Dendritic cell treated with granulocyte-macrophage colony-stimulating factor and Interleukin-4, amounts not matched to agents 40 ng/mL and 50 ng/mL, for 4 days (primary cell): ENCODE measurements at regions of chr12 and their contacts with region 1.

Region 1: DNA sequence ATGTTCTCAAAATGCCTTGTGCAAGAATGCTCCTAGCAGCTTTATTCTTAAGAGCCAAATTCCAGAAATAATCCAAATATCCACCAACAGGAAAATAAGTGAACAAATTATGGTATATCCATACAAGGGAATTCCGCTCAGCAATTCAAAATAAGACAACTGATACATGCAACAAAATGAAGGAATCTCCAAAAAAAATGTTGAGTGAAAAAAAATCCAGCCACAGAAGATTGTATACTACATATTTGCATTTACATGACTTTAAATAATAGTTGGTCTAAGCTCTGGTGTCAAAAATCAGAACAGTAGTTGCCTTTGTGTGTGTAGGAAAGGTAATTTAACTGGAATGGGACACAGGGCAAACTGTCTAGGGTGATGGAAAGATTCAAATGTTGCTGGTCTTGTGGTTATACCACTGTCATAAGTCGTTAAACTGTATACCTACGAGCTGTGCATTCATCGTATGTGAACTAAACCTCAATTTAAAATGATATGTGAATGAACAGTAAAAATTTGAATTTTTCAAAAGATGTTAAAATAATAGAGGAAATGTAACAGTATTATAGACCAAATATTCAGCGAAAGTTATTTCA is 3.2 kb downstream of the CD69 start:
- H3K4me3 Mint-ChIP-seq: no peak overlapping the region
- H3K27ac Mint-ChIP-seq: peak overlapping the region; percentile 92
- H3K4me1 Mint-ChIP-seq: peaks cover 35% of the 10 kb centered on the region
- H3K27me3 Mint-ChIP-seq: no peaks in the 10 kb centered on the region

Region 2: GRCh38 chr12:9773216-9773877 is 15.8 kb after region 1 on chr12:
- intact Hi-C with region 1: no loop called
- H3K4me3 Mint-ChIP-seq: no peak overlapping the region
- H3K27ac Mint-ChIP-seq: no peak overlapping the region
- H3K4me1 Mint-ChIP-seq: peaks cover 15% of the 10 kb centered on the region
- H3K27me3 Mint-ChIP-seq: no peaks in the 10 kb centered on the region

Region 3: GRCh38 chr12:9869307-9870161 is 112.0 kb after region 1 on chr12 and contains the start of gene CLEC2B:
- intact Hi-C with region 1: loop called (anchors 5 kb)
- H3K4me3 Mint-ChIP-seq: peak within 1 kb of the TSS; percentile 85
- H3K27ac Mint-ChIP-seq: peak within 1 kb of the TSS; percentile 100
- H3K4me1 Mint-ChIP-seq: peaks cover 26% of the 10 kb centered on the region
- H3K27me3 Mint-ChIP-seq: no peaks in the 10 kb centered on the region